WTC11 (cell line): ENCODE measurements at regions of chr7 and their contacts with region 1.

Region 1: DNA sequence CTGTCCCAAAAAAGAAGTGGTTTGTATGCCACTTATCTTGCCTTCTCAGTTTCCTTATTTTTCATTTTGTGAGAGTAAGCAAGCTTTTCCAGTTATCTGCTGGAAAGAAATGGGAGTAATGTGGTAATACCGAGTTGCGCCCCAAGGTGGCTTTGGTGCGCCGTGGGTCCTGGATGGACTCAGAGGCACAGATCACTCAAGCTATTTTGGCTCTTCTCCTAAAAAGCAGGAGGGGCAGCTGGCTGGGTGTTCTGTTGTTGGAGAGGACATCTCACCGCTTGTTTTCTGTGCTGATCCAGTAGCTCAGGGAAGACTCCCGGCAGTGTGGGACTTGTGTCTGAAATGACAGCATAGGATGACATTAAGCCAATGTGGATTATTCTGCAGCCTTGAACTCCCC is 16.4 kb downstream of the PRKRIP1 start:
- DNase-seq: peak; percentile 66
- ATAC-seq: peak; percentile 90
- H3K4me3 Mint-ChIP-seq: no peak overlapping the region
- H3K27ac Mint-ChIP-seq: no peak overlapping the region; the same call in 1 of the 2 replicates
- H3K4me1 Mint-ChIP-seq: no peaks in the 10 kb centered on the region
- H3K27me3 Mint-ChIP-seq: no peaks in the 10 kb centered on the region; the same call in 1 of the 2 replicates
- CTCF ChIP-seq: peak; percentile 45

Region 2: GRCh38 chr7:102464577-102465280 is 52.2 kb after region 1 on chr7 and contains the starts of genes ALKBH4 and LRWD1:
- CTCF ChIA-PET with region 1: interaction called, 14 read pairs
- POLR2A ChIA-PET with region 1: no interaction called
- DNase-seq: peak; percentile 91
- ATAC-seq: peak; percentile 73
- H3K4me3 Mint-ChIP-seq: peak within 1 kb of the TSS; percentile 94
- H3K27ac Mint-ChIP-seq: peak within 1 kb of the TSS; percentile 80
- H3K4me1 Mint-ChIP-seq: peaks cover 8% of the 10 kb centered on the region
- H3K27me3 Mint-ChIP-seq: no peaks in the 10 kb centered on the region
- CTCF ChIP-seq: no peak
- total RNA-seq, gene ALKBH4: 20.4 to 24.8 TPM (median 22.9 TPM) in 3 replicates
- total RNA-seq, gene LRWD1: 37.4 to 41.7 TPM (median 39.6 TPM) in 3 replicates